ENCODE measurements at regions of chr11 and their contacts with region 1.

Region 1: GRCh38 chr11:59753650-59754493 is 1.3 kb upstream of the STX3 start:
- DNase-seq: peak; percentile 81 to 90
- ATAC-seq: peak; percentile 54 to 84
- H3K4me3 ChIP-seq: peak overlapping the region; percentile 93
- H3K27ac ChIP-seq: peak overlapping the region; percentile 86 to 95; a peak in 4 of 6 replicates
- H3K4me1 ChIP-seq: peaks cover 15% of the 10 kb centered on the region
- CTCF ChIP-seq: peak; percentile 89
- EP300 ChIP-seq: no peak
- POLR2A ChIP-seq: no peak
- RAD21 ChIP-seq: peak; percentile 90 to 92

Region 2: DNA sequence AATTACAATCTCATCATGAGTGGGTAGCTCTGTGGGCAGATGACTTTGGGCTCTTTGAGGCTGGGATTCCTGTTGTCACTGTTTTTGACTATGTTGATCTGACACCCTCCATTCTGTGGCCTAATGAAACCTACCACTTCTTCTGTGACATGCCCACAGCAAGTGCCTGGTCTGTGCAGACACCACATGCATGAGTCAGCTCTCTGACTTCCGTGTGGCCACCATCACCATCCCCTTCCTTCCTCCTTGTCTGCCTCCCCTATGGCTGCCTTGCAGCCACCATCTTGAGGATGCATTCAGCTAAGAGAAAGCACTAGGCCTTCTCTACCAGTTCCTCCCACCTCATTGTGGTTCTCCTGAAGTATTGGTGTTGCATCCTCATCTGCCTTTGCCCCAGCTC is 25.0 kb before region 1 on chr11:
- CTCF ChIA-PET with region 1: interaction called, 17 read pairs
- POLR2A ChIA-PET with region 1: no interaction called
- DNase-seq: no peak
- ATAC-seq: no peak
- H3K4me3 ChIP-seq: no peak overlapping the region
- H3K27ac ChIP-seq: no peak overlapping the region
- H3K4me1 ChIP-seq: no peaks in the 10 kb centered on the region
- CTCF ChIP-seq: no peak
- EP300 ChIP-seq: no peak
- POLR2A ChIP-seq: no peak
- RAD21 ChIP-seq: no peak

Region 3: DNA sequence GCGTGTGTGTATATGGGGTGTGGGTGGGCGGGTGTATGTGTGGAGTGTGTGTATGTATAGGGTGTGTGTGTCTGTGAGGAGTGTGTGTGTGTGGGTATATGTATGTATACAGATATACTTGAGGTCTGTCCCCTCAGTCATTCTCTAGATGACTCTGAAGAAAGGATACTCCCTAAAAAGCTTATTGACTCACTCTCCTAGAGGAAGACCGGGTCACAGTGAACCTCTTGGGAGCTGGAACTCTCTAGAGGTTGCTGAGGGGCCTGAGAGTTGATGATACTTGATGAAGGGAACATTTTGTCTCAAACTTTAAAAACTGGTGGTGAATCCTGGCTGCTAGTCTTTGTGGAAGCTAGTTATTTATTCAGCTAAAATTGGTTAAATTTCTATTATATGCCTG is 16.4 kb after region 1 on chr11:
- CTCF ChIA-PET with region 1: interaction called, 18 read pairs
- POLR2A ChIA-PET with region 1: interaction called, 6 read pairs
- DNase-seq: no peak
- ATAC-seq: no peak
- H3K4me3 ChIP-seq: no peak overlapping the region
- H3K27ac ChIP-seq: no peak overlapping the region
- H3K4me1 ChIP-seq: peaks cover 1% of the 10 kb centered on the region; the same call in 2 of the 3 replicates
- CTCF ChIP-seq: no peak
- EP300 ChIP-seq: no peak
- POLR2A ChIP-seq: no peak
- RAD21 ChIP-seq: no peak

Region 4: DNA sequence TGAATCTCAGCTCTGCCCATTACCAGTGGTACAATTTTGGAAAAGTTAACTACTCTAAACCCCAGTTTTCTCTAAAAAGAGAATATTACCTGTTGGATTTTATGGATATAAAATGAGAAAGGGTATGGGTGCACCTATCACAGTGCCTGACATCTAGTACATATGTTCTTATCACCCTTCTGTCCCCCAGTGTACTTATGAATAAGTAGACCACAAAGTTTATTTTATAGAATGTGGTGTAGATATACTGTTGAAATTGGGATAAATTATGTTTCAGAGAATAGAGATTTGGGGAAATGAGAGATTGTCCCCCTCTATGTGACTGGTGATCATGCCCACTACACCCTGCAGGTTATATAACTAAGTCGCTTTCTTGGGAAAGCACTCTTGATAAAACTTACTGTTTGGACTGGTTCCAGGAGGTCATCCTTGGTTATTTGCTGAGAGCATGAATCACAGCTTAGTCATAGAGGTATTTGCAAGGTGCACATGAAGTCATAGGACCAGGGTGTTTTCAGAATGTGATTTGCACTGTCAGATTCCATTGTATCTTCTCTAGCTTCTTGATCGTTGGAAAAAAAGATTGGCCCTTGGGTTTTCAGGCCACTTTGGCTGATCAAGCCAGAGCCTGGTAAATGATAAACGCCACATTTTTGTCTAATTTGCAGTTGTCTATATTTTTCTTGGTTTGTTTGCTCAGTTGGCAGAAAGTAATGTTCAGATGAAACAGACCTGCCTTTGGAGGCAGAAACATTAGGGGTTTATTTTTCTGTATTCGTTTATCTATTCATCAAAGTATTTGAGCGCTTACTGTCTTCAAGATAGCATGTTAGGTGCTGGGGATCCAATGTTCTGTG is 22.6 kb after region 1 on chr11:
- CTCF ChIA-PET with region 1: interaction called, 18 read pairs
- POLR2A ChIA-PET with region 1: interaction called, 7 read pairs
- DNase-seq: peak; percentile 88 to 96
- ATAC-seq: peak; percentile 89 to 92
- H3K4me3 ChIP-seq: no peak overlapping the region
- H3K27ac ChIP-seq: 0 out of 6 replicates have a peak overlapping the region, but pooled peaks of 1 of the 2 experiments have one; percentile 22
- H3K4me1 ChIP-seq: peaks cover 39% of the 10 kb centered on the region
- CTCF ChIP-seq: no peak
- EP300 ChIP-seq: no peak
- POLR2A ChIP-seq: no peak
- RAD21 ChIP-seq: no peak

Region 5: GRCh38 chr11:59787816-59788215 is 33.9 kb after region 1 on chr11:
- CTCF ChIA-PET with region 1: interaction called, 21 read pairs
- POLR2A ChIA-PET with region 1: interaction called, 3 read pairs
- DNase-seq: no peak
- ATAC-seq: no peak
- H3K4me3 ChIP-seq: no peak overlapping the region
- H3K27ac ChIP-seq: no peak overlapping the region
- H3K4me1 ChIP-seq: peaks cover 19% of the 10 kb centered on the region
- CTCF ChIP-seq: no peak
- EP300 ChIP-seq: no peak
- POLR2A ChIP-seq: no peak
- RAD21 ChIP-seq: no peak

Region 6: DNA sequence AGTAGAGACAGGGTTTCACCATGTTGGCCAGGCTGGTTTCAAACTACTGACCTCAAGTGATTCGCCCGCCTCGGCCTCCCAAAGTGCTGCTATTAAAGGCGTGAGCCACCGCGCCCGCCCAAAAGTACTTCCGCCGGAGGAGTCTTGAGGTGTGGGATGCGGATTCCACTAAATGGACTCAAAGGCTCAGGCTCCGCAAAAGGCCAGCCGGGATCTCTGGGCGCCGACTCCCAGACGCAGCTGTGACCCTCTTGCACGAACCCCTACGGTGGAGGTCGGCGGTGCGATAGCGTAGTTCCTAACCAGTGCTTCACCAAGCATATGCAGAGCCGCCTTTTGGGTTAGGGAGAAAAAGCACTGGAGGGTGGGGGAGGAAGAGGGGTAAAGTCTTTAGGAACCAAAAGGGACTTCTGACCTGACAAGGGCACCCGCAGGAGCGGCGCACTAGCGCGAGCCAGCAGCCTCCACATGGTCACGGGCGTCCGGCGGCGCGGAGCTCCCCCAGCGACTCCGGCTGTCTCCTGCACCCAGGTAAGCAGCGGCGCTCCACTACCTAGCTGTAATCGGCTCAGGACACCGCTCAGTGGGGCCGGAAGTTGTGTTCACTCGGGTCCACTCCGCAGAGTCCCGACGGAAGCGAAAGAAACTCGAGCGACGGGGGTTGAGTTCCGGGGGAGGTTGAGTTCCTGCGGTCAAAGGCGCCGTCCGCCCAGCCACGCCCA is 56.5 kb after region 1 on chr11 and contains the start of gene MRPL16:
- CTCF ChIA-PET with region 1: interaction called, 261 read pairs
- POLR2A ChIA-PET with region 1: interaction called, 3 read pairs
- DNase-seq: peak; percentile 84 to 92
- ATAC-seq: peak; percentile 98
- H3K4me3 ChIP-seq: peak within 1 kb of the TSS; percentile 90
- H3K27ac ChIP-seq: peak within 1 kb of the TSS; percentile 83 to 91
- H3K4me1 ChIP-seq: peaks cover 11% of the 10 kb centered on the region; the same call in 2 of the 3 replicates
- CTCF ChIP-seq: no peak
- EP300 ChIP-seq: no peak
- POLR2A ChIP-seq: peak; percentile 78
- RAD21 ChIP-seq: no peak; a peak in 1 of 5 replicates
- polyA plus RNA-seq, gene MRPL16: 62.8 and 77.7 TPM in 2 replicates